Activated CD4-positive, alpha-beta T cell treated with anti-CD3 and anti-CD28 coated beads, Interleukin-2, amount 10 ng/mL, durations not matched to agents 24 days and 14 days (primary cell): ENCODE measurements at regions of chr10 and their contacts with region 1.

Region 1: GRCh38 chr10:8137726-8138125 is 83.2 kb downstream of the GATA3 start:
- DNase-seq: no peak
- H3K4me3 Mint-ChIP-seq: peak overlapping the region; percentile 82
- H3K27ac Mint-ChIP-seq: peak overlapping the region; percentile 89
- H3K4me1 Mint-ChIP-seq: peaks cover 63% of the 10 kb centered on the region
- H3K27me3 Mint-ChIP-seq: no peaks in the 10 kb centered on the region

Region 2: GRCh38 chr10:7818295-7819122 is 319.2 kb before region 1 on chr10 and contains the start of gene TAF3:
- intact Hi-C with region 1: no loop called
- DNase-seq: peak; percentile 99
- H3K4me3 Mint-ChIP-seq: peak within 1 kb of the TSS; percentile 97
- H3K27ac Mint-ChIP-seq: peak within 1 kb of the TSS; percentile 88
- H3K4me1 Mint-ChIP-seq: peaks cover 18% of the 10 kb centered on the region
- H3K27me3 Mint-ChIP-seq: peaks cover 19% of the 10 kb centered on the region
- total RNA-seq, gene TAF3: 15.1 and 15.9 TPM in 2 replicates

Region 3: GRCh38 chr10:8065651-8066050 is 72.1 kb before region 1 on chr10:
- intact Hi-C with region 1: loop called (anchors 1 kb)
- DNase-seq: peak; percentile 62
- H3K4me3 Mint-ChIP-seq: peak overlapping the region; percentile 77
- H3K27ac Mint-ChIP-seq: peak overlapping the region; percentile 82
- H3K4me1 Mint-ChIP-seq: peaks cover 81% of the 10 kb centered on the region
- H3K27me3 Mint-ChIP-seq: no peaks in the 10 kb centered on the region

Region 4: GRCh38 chr10:8112226-8112905 is 25.4 kb before region 1 on chr10:
- intact Hi-C with region 1: no loop called
- DNase-seq: no peak
- H3K4me3 Mint-ChIP-seq: no peak overlapping the region
- H3K27ac Mint-ChIP-seq: no peak overlapping the region
- H3K4me1 Mint-ChIP-seq: no peaks in the 10 kb centered on the region
- H3K27me3 Mint-ChIP-seq: peaks cover 3% of the 10 kb centered on the region

Region 5: GRCh38 chr10:8183241-8183704 is 45.5 kb after region 1 on chr10:
- intact Hi-C with region 1: loop called (anchors 2 kb)
- DNase-seq: peak; percentile 72
- H3K4me3 Mint-ChIP-seq: peak overlapping the region; percentile 14
- H3K27ac Mint-ChIP-seq: no peak overlapping the region
- H3K4me1 Mint-ChIP-seq: peaks cover 17% of the 10 kb centered on the region
- H3K27me3 Mint-ChIP-seq: peaks cover 17% of the 10 kb centered on the region

Region 6: GRCh38 chr10:8416192-8416701 is 278.5 kb after region 1 on chr10:
- intact Hi-C with region 1: no loop called
- DNase-seq: peak; percentile 83
- H3K4me3 Mint-ChIP-seq: peak overlapping the region; percentile 38
- H3K27ac Mint-ChIP-seq: peak overlapping the region; percentile 90
- H3K4me1 Mint-ChIP-seq: peaks cover 29% of the 10 kb centered on the region
- H3K27me3 Mint-ChIP-seq: peaks cover 10% of the 10 kb centered on the region

Region 7: GRCh38 chr10:8473205-8473604 is 335.5 kb after region 1 on chr10:
- intact Hi-C with region 1: loop called (anchors 2 kb)
- DNase-seq: peak; percentile 75
- H3K4me3 Mint-ChIP-seq: no peak overlapping the region
- H3K27ac Mint-ChIP-seq: no peak overlapping the region
- H3K4me1 Mint-ChIP-seq: peaks cover 3% of the 10 kb centered on the region
- H3K27me3 Mint-ChIP-seq: peaks cover 30% of the 10 kb centered on the region

Region 8: GRCh38 chr10:8534096-8534495 is 396.4 kb after region 1 on chr10:
- intact Hi-C with region 1: no loop called
- DNase-seq: no peak
- H3K4me3 Mint-ChIP-seq: no peak overlapping the region
- H3K27ac Mint-ChIP-seq: no peak overlapping the region
- H3K4me1 Mint-ChIP-seq: peaks cover 2% of the 10 kb centered on the region
- H3K27me3 Mint-ChIP-seq: peaks cover 11% of the 10 kb centered on the region